ENCODE measurements at regions of chr19 and their contacts with region 1.

Region 1: GRCh38 chr19:12974301-12975220 is 5.2 kb downstream of the DAND5 start:
- DNase-seq: no peak
- ATAC-seq: no peak

Region 2: GRCh38 chr19:13241231-13242104 is 266.9 kb after region 1 on chr19:
- intact Hi-C with region 1: loop called (anchors 10 kb)
- DNase-seq: no peak
- ATAC-seq: no peak